ENCODE measurements at regions of chr9 and their contacts with region 1.

Region 1: DNA sequence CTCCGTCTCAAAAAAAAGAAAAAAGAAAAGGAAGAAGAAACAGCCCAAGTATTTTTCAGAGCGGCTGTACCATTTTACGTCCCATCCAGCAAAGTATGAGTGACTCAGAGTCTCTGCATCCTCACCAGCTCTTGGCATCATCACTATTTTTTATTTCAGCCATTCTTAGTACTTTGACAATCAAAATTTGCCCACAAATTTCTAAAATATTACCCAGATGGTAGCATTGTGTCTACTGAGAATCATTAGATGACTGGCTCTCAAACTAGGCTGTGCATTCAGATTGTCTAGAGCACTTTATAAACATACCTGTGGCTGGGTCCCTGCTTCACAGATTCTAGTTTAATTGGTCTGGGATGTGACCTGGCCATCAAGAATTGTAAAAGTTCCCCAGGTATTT is 21.6 kb upstream of the MELK start:
- DNase-seq: no peak
- ATAC-seq: no peak
- H3K4me3 ChIP-seq: no peak overlapping the region
- H3K27ac ChIP-seq: no peak overlapping the region
- H3K4me1 ChIP-seq: no peaks in the 10 kb centered on the region
- H3K27me3 ChIP-seq: no peaks in the 10 kb centered on the region
- CTCF ChIP-seq: no peak

Region 2: GRCh38 chr9:36190388-36191287 is 360.5 kb before region 1 on chr9 and contains the start of gene CLTA:
- CTCF ChIA-PET with region 1: no interaction called
- POLR2A ChIA-PET with region 1: interaction called, 15 read pairs
- in situ Hi-C with region 1: no loop called
- intact Hi-C with region 1: no loop called
- DNase-seq: peak; percentile 99
- ATAC-seq: peak; percentile 99
- H3K4me3 ChIP-seq: peak within 1 kb of the TSS; percentile 78 to 97
- H3K27ac ChIP-seq: peak within 1 kb of the TSS; percentile 99
- H3K4me1 ChIP-seq: peaks cover 30% of the 10 kb centered on the region
- H3K27me3 ChIP-seq: no peaks in the 10 kb centered on the region
- CTCF ChIP-seq: no peak
- total RNA-seq, gene CLTA: 760 TPM

Region 3: DNA sequence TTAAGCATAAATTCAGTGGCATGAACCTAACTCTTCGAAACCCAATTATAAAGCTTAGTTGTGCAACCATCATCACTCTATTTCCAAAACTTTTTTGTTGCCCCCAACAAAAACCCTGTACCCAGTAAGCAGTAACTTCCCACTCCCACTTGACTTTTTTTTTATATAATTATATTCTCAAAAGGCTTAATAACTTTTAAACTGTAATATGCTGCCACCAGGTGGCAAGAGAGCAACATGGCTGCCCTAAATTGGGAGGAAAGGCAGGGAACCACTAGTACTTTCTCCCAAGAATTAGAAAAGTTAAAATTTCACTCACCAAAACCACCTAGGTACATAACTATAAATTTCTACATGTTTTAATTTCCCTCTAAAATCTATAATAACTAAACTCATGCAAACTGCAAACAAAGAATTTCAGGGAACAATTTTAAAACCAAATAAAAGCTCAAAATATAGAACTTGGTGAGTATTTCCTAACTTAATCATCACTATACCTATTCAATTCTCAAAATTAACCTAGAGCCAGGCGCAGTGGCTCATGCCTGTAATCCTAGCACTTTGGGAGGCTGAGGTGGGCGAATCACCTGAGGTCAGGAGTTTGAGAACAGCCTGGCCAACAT is 100.9 kb before region 1 on chr9:
- CTCF ChIA-PET with region 1: no interaction called
- POLR2A ChIA-PET with region 1: no interaction called
- in situ Hi-C with region 1: no loop called
- intact Hi-C with region 1: loop called (anchors 10 kb)
- DNase-seq: peak; percentile 20
- ATAC-seq: peak; percentile 60; the same call in 1 of the 2 replicates
- H3K4me3 ChIP-seq: no peak overlapping the region
- H3K27ac ChIP-seq: no peak overlapping the region
- H3K4me1 ChIP-seq: no peaks in the 10 kb centered on the region
- H3K27me3 ChIP-seq: no peaks in the 10 kb centered on the region
- CTCF ChIP-seq: no peak

Region 4: GRCh38 chr9:36499174-36499890 is 51.8 kb before region 1 on chr9:
- CTCF ChIA-PET with region 1: no interaction called
- POLR2A ChIA-PET with region 1: interaction called, 17 read pairs
- in situ Hi-C with region 1: no loop called
- intact Hi-C with region 1: no loop called
- DNase-seq: no peak
- ATAC-seq: no peak
- H3K4me3 ChIP-seq: no peak overlapping the region
- H3K27ac ChIP-seq: no peak overlapping the region
- H3K4me1 ChIP-seq: no peaks in the 10 kb centered on the region
- H3K27me3 ChIP-seq: no peaks in the 10 kb centered on the region; the same call in 1 of the 2 replicates
- CTCF ChIP-seq: no peak

Region 5: DNA sequence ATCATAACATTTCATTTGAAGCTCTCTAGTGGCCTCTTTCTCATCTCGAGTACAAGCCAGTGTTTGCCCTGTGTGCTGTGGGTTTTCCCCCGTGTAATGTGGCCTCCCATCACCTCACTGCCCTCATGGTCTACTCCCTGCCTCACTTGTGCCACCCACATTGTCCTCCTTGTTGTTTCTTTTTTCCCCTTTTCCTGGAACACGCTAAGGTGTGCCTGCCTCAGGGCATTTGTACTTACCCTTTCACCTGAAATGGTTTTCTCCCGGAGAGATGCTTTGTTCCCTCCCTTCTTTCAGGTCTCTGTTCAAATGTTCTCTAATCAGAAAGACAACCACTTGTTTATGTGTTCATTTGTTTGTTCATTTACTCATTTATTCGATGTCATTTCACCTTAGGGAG is 61.8 kb after region 1 on chr9:
- CTCF ChIA-PET with region 1: no interaction called
- POLR2A ChIA-PET with region 1: no interaction called
- in situ Hi-C with region 1: no loop called
- intact Hi-C with region 1: no loop called
- DNase-seq: no peak
- ATAC-seq: no peak
- H3K4me3 ChIP-seq: no peak overlapping the region
- H3K27ac ChIP-seq: no peak overlapping the region
- H3K4me1 ChIP-seq: no peaks in the 10 kb centered on the region
- H3K27me3 ChIP-seq: no peaks in the 10 kb centered on the region
- CTCF ChIP-seq: no peak

Measured in Panc1 (cell line).